Naive thymus-derived CD4-positive, alpha-beta T cell (primary cell): ENCODE measurements at regions of chr12 and their contacts with region 1.

Region 1: GRCh38 chr12:67268896-67269631 is at the start of gene CAND1:
- DNase-seq: peak; percentile 93 to 99 (median 98)
- ATAC-seq: peak; percentile 89
- H3K4me3 ChIP-seq: peak within 1 kb of the TSS; percentile 69
- H3K4me3 Mint-ChIP-seq: peak within 1 kb of the TSS; percentile 80 to 99 (median 95)
- H3K27ac ChIP-seq: peak within 1 kb of the TSS; percentile 91
- H3K27ac Mint-ChIP-seq: peak within 1 kb of the TSS; percentile 97 to 100 (median 99)
- H3K4me1 ChIP-seq: peaks cover 22 to 26% of the 10 kb centered on the region in 2 donors
- H3K4me1 Mint-ChIP-seq: peaks cover 22 to 55% (median 52%) of the 10 kb centered on the region in 7 donors
- H3K27me3 ChIP-seq: no peaks in the 10 kb centered on the region
- H3K27me3 Mint-ChIP-seq: no peaks in the 10 kb centered on the region
- total RNA-seq, gene CAND1: 83.2 to 160 (median 111) TPM

Region 2: GRCh38 chr12:66717036-66717673 is 551.9 kb before region 1 on chr12:
- CTCF ChIA-PET with region 1: no interaction called
- POLR2A ChIA-PET with region 1: no interaction called
- intact Hi-C with region 1: loop called in 1 of 2 experiments (anchors 10 kb)
- DNase-seq: no peak
- ATAC-seq: no peak
- H3K4me3 ChIP-seq: no peak overlapping the region
- H3K4me3 Mint-ChIP-seq: no peak overlapping the region
- H3K27ac ChIP-seq: no peak overlapping the region
- H3K27ac Mint-ChIP-seq: peak overlapping the region in 1 of 9 donors; percentile 97
- H3K4me1 ChIP-seq: peaks cover 0 to 18% of the 10 kb centered on the region in 2 donors
- H3K4me1 Mint-ChIP-seq: peaks cover 8 to 40% (median 25%) of the 10 kb centered on the region in 7 donors
- H3K27me3 ChIP-seq: no peaks in the 10 kb centered on the region
- H3K27me3 Mint-ChIP-seq: peaks cover 0 to 19% (median 0%) of the 10 kb centered on the region in 5 donors

Region 3: GRCh38 chr12:67280572-67280971 is 11.5 kb after region 1 on chr12:
- CTCF ChIA-PET with region 1: interaction called, 3 read pairs
- POLR2A ChIA-PET with region 1: interaction called, 11 read pairs
- intact Hi-C with region 1: loop called in 1 of 2 experiments (anchors 2 kb)
- DNase-seq: no peak
- ATAC-seq: no peak
- H3K4me3 ChIP-seq: no peak overlapping the region
- H3K4me3 Mint-ChIP-seq: peak overlapping the region in 3 of 10 donors; percentile 8 to 32 (median 26)
- H3K27ac ChIP-seq: no peak overlapping the region
- H3K27ac Mint-ChIP-seq: peak overlapping the region in 2 of 9 donors; percentile 28 to 60
- H3K4me1 ChIP-seq: peaks cover 12 to 19% of the 10 kb centered on the region in 2 donors
- H3K4me1 Mint-ChIP-seq: peaks cover 41 to 92% (median 84%) of the 10 kb centered on the region in 7 donors
- H3K27me3 ChIP-seq: no peaks in the 10 kb centered on the region
- H3K27me3 Mint-ChIP-seq: no peaks in the 10 kb centered on the region

Region 4: DNA sequence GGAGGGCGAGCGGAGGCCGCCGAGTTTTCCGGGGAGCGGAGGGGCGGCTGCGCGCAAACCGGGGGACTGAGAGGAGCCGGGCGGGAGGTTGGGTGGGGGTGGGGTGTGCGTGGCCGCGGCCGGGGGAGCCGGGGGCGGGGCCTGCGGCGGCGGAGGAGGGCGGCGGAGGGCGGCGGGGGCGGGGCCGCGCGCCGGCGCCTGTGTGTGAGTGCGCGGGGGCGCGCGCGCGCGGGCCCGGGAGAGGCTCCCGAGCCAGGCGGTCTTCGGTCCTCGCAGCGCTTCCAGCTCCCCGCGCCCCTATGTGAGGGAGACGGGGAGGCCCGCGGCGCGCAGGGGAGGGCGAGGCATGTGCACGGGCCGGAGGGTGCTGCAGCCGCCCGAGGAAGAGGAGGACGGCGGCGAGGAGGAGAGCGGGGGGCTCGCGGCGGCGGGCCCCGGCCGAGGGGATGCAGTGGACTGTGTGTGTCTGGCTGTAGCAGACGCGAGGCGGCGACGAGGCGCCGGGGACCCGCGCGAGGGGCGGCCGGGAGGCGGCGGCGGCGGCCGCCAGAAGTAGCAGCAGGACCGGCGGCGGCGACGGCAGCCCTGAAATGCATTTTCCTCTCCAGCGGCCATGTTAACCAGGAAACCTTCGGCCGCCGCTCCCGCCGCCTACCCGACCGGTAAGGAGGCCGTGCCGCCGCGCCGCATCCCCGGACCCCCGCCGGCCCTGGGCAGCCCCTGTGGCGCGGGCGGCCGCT is 379.6 kb after region 1 on chr12 and contains the start of gene DYRK2:
- CTCF ChIA-PET with region 1: no interaction called
- POLR2A ChIA-PET with region 1: interaction called, 6 read pairs
- intact Hi-C with region 1: loop called (anchors 1 kb)
- DNase-seq: peak; percentile 65 to 83 (median 78)
- ATAC-seq: peak; percentile 81
- H3K4me3 ChIP-seq: peak within 1 kb of the TSS; percentile 93
- H3K4me3 Mint-ChIP-seq: peak within 1 kb of the TSS; percentile 93 to 100 (median 98)
- H3K27ac ChIP-seq: peak within 1 kb of the TSS; percentile 90
- H3K27ac Mint-ChIP-seq: peak within 1 kb of the TSS; percentile 89 to 100 (median 98)
- H3K4me1 ChIP-seq: peaks cover 22 to 23% of the 10 kb centered on the region in 2 donors
- H3K4me1 Mint-ChIP-seq: peaks cover 38 to 48% (median 42%) of the 10 kb centered on the region in 7 donors
- H3K27me3 ChIP-seq: no peaks in the 10 kb centered on the region
- H3K27me3 Mint-ChIP-seq: peaks cover 0 to 13% (median 0%) of the 10 kb centered on the region in 5 donors
- total RNA-seq, gene DYRK2: 55.3 to 157 (median 119) TPM

Region 5: GRCh38 chr12:68236421-68237059 is 967.5 kb after region 1 on chr12:
- CTCF ChIA-PET with region 1: no interaction called
- POLR2A ChIA-PET with region 1: no interaction called
- intact Hi-C with region 1: loop called in 1 of 2 experiments (anchors 1 kb)
- DNase-seq: peak in 7 of 9 donors; percentile 58 to 78 (median 68)
- ATAC-seq: peak; percentile 84
- H3K4me3 ChIP-seq: peak overlapping the region; percentile 64
- H3K4me3 Mint-ChIP-seq: peak overlapping the region; percentile 82 to 97 (median 94)
- H3K27ac ChIP-seq: peak overlapping the region; percentile 67
- H3K27ac Mint-ChIP-seq: peak overlapping the region; percentile 88 to 99 (median 96)
- H3K4me1 ChIP-seq: peaks cover 23 to 32% of the 10 kb centered on the region in 2 donors
- H3K4me1 Mint-ChIP-seq: peaks cover 35 to 72% (median 60%) of the 10 kb centered on the region in 7 donors
- H3K27me3 ChIP-seq: no peaks in the 10 kb centered on the region
- H3K27me3 Mint-ChIP-seq: no peaks in the 10 kb centered on the region

Region 6: DNA sequence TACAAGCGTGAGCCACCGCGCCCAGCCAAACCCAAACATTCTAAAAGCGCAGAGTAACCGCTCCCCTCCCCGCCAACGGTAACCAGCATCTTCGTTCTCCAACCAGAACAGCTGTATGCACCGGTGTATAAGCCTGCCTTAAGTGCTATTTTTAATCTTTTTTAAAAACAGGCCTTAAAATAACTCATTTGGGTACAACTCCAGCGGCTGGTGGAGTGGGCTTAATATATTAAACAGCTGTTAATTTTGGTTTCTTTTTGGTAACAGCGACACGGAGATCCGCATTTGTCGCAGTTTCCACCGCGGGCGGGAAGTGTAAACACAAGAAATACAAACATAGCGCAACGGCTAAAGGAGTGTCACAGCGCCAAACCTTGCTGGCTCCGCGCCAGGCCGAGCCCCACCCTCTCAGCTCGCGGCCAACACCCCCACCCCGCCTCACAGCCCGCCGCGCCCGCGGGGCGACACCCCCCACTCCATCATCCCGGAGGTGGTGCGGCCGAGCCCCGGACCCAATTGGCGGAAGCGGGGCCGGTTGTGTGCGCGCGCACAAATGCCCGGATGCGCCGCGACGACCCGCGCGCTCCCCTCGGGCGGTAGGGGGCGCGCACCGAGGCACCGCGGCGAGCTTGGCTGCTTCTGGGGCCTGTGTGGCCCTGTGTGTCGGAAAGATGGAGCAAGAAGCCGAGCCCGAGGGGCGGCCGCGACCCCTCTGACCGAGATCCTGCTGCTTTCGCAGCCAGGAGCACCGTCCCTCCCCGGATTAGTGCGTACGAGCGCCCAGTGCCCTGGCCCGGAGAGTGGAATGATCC is 1538.7 kb after region 1 on chr12 and contains the start of gene MDM2:
- CTCF ChIA-PET with region 1: no interaction called
- POLR2A ChIA-PET with region 1: interaction called, 19 read pairs
- intact Hi-C with region 1: loop called (anchors 1 kb)
- DNase-seq: peak; percentile 94 to 98 (median 96)
- ATAC-seq: peak; percentile 97
- H3K4me3 ChIP-seq: peak within 1 kb of the TSS; percentile 79
- H3K4me3 Mint-ChIP-seq: peak within 1 kb of the TSS; percentile 87 to 100 (median 96)
- H3K27ac ChIP-seq: peak within 1 kb of the TSS; percentile 96
- H3K27ac Mint-ChIP-seq: peak within 1 kb of the TSS; percentile 96 to 100 (median 97)
- H3K4me1 ChIP-seq: peaks cover 3 to 13% of the 10 kb centered on the region in 2 donors
- H3K4me1 Mint-ChIP-seq: peaks cover 6 to 47% (median 29%) of the 10 kb centered on the region in 7 donors
- H3K27me3 ChIP-seq: no peaks in the 10 kb centered on the region
- H3K27me3 Mint-ChIP-seq: no peaks in the 10 kb centered on the region
- total RNA-seq, gene MDM2: 77.8 to 271 (median 80.8) TPM